Endothelial cell of umbilical vein (primary cell): ENCODE measurements at regions of chr5 and their contacts with region 1.

Region 1: GRCh38 chr5:135426102-135427082 is 20.8 kb downstream of the DCANP1 start:
- DNase-seq: peak; percentile 57
- H3K4me3 ChIP-seq: no peak overlapping the region
- H3K27ac ChIP-seq: no peak overlapping the region
- H3K4me1 ChIP-seq: no peaks in the 10 kb centered on the region
- H3K27me3 ChIP-seq: peaks cover 4 to 20% of the 10 kb centered on the region in 2 experiments
- CTCF ChIP-seq: peak; percentile 71 to 72
- POLR2A ChIP-seq: no peak

Region 2: GRCh38 chr5:135341016-135341666 is 85.3 kb before region 1 on chr5:
- CTCF ChIA-PET with region 1: interaction called, 10 read pairs
- POLR2A ChIA-PET with region 1: no interaction called
- dilution Hi-C with region 1: no loop called
- intact Hi-C with region 1: no loop called
- DNase-seq: no peak
- H3K4me3 ChIP-seq: no peak overlapping the region
- H3K27ac ChIP-seq: no peak overlapping the region
- H3K4me1 ChIP-seq: no peaks in the 10 kb centered on the region
- H3K27me3 ChIP-seq: no peaks in the 10 kb centered on the region
- CTCF ChIP-seq: no peak
- POLR2A ChIP-seq: no peak

Region 3: GRCh38 chr5:135376961-135377624 is 49.3 kb before region 1 on chr5:
- CTCF ChIA-PET with region 1: interaction called, 33 read pairs
- POLR2A ChIA-PET with region 1: no interaction called
- dilution Hi-C with region 1: no loop called
- intact Hi-C with region 1: loop called (anchors 2 kb)
- DNase-seq: peak; percentile 66
- H3K4me3 ChIP-seq: no peak overlapping the region
- H3K27ac ChIP-seq: no peak overlapping the region
- H3K4me1 ChIP-seq: peaks cover 21% of the 10 kb centered on the region
- H3K27me3 ChIP-seq: no peaks in the 10 kb centered on the region
- CTCF ChIP-seq: no peak
- POLR2A ChIP-seq: no peak

Region 4: GRCh38 chr5:135405082-135405481 is 21.3 kb before region 1 on chr5:
- CTCF ChIA-PET with region 1: interaction called, 23 read pairs
- POLR2A ChIA-PET with region 1: no interaction called
- dilution Hi-C with region 1: no loop called
- intact Hi-C with region 1: no loop called
- DNase-seq: no peak
- H3K4me3 ChIP-seq: no peak overlapping the region
- H3K27ac ChIP-seq: no peak overlapping the region
- H3K4me1 ChIP-seq: no peaks in the 10 kb centered on the region
- H3K27me3 ChIP-seq: peaks cover 3 to 22% of the 10 kb centered on the region in 2 experiments
- CTCF ChIP-seq: no peak
- POLR2A ChIP-seq: no peak

Region 5: DNA sequence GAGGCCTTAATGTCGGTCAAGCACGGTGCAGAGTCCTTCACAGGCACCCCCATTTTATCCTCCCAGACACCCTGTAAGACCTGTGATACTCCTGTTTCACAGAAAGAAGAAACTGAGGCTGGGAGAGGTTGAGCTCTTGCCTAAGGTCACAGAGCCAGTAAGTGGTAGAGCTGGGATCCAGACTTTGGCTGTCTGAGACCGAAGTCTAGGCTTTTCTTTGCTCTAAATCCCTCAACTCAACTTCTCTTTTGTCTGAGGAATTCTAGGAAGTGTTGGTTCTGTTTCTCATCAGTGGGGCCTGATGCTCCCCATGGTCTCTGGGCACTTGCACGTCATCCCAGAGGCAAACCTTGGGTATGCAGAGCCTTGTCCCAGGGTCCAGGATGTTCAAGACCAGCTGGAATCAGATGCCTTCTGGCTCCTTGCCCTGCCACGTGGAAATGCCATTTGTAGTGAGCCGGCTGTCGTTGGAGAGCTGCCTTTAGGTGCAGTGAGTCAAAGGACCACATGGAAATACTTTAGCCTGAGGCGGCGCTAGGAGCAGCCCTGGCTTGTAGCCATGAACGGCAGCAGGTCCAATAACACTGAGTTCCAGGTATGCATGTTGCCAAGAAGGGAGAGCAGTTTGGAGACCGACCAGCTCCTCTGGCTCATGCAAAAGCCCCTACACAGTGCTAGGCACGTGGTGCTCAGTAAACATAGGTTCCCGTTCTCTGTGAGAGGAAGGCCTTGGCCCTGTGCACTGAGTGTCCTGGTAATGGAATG is 11.6 kb after region 1 on chr5:
- CTCF ChIA-PET with region 1: interaction called, 44 read pairs
- POLR2A ChIA-PET with region 1: no interaction called
- dilution Hi-C with region 1: no loop called
- intact Hi-C with region 1: no loop called
- DNase-seq: no peak
- H3K4me3 ChIP-seq: no peak overlapping the region
- H3K27ac ChIP-seq: no peak overlapping the region
- H3K4me1 ChIP-seq: no peaks in the 10 kb centered on the region
- H3K27me3 ChIP-seq: peaks cover 5 to 25% of the 10 kb centered on the region in 2 experiments
- CTCF ChIP-seq: no peak
- POLR2A ChIP-seq: no peak

Region 6: DNA sequence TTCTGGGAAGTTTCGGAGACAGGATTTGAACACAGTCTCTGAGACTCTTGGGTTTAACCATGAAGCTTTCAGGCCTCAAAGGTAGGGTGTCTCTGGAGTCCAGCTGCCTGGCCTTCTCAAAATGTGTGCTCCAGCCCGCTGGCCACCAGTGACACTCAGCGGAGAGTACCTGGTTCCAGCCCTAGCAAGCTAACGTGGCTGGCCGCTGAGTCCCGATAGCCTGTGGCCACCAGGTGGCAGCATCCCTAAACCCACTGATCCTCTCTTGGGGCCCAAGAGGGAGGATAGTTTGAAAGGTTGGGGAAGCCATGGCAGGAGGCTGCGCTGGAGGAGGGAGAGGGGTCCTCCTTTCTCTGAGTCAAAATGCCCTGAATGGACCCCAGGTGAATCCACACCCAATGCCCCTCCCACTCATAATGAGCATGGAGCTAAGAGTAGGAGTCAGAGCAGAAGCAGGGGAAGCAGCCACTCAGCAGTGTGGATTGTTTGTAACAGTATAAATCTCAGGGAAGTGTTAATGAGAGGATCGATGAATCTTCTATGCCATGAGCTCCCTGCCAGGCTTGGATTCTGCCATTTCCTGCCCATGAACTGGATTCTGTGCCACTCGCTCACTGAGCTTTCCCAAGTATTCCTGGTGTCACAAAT is 31.2 kb after region 1 on chr5:
- CTCF ChIA-PET with region 1: interaction called, 13 read pairs
- POLR2A ChIA-PET with region 1: no interaction called
- dilution Hi-C with region 1: no loop called
- intact Hi-C with region 1: no loop called
- DNase-seq: peak; percentile 50
- H3K4me3 ChIP-seq: no peak overlapping the region
- H3K27ac ChIP-seq: no peak overlapping the region
- H3K4me1 ChIP-seq: no peaks in the 10 kb centered on the region
- H3K27me3 ChIP-seq: peaks cover 17 to 22% of the 10 kb centered on the region in 2 experiments
- CTCF ChIP-seq: peak; percentile 90 to 91
- POLR2A ChIP-seq: no peak